ENCODE measurements at regions of chr6 and their contacts with region 1.

Region 1: DNA sequence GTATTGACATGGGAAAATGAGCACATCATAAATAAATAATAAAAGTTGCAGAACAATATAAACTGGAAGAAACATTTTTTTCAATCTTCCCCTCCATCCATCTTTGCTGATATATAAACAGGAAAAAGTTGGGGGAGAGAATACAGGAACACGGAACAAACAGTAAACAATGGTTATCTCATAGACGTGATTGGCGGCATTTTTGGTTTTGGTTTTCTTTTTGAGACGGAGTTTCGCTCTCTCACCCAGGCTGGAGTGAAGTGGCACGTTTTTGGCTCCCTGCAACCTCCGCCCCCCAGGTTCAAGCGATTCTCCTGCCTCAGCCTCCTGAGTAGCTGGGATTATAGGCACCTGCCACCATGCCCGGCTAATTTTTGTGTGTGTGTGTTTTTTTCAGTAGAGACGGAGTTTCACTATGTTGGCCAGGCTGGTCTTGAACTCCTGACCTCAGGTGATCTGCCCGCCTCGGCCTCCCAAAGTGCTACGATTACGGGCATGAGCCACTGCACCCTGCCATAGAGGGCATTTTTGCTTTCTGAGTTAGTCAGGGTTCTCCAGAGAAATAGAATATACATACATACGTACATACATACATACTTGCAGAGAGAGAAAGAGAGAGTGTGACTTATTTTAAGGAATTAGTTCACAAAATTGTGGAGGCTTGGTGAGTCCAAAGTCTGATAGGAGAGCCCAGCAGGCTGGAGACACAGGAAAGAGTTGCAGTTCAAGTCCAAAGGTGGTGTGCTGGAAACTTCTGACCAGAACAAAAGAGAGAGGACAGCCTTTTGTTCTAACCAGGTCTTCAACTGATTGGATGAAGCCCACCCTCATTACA is 22.6 kb downstream of the GNL1 start:
- DNase-seq: no peak
- ATAC-seq: no peak
- H3K4me3 Mint-ChIP-seq: no peak overlapping the region
- H3K27ac Mint-ChIP-seq: no peak overlapping the region
- H3K4me1 Mint-ChIP-seq: no peaks in the 10 kb centered on the region
- H3K27me3 Mint-ChIP-seq: no peaks in the 10 kb centered on the region; the same call in 1 of the 2 replicates
- CTCF ChIP-seq: no peak

Region 2: GRCh38 chr6:30646458-30647241 is 113.0 kb after region 1 on chr6 and contains the start of gene C6orf136:
- CTCF ChIA-PET with region 1: no interaction called
- POLR2A ChIA-PET with region 1: no interaction called
- DNase-seq: peak; percentile 91
- ATAC-seq: peak; percentile 71
- H3K4me3 Mint-ChIP-seq: peak within 1 kb of the TSS; percentile 76
- H3K27ac Mint-ChIP-seq: peak within 1 kb of the TSS; percentile 74
- H3K4me1 Mint-ChIP-seq: peaks cover 21% of the 10 kb centered on the region
- H3K27me3 Mint-ChIP-seq: no peaks in the 10 kb centered on the region
- CTCF ChIP-seq: no peak
- total RNA-seq, gene C6orf136: 21.8 to 26.5 TPM (median 25.5 TPM) in 3 replicates

Region 3: DNA sequence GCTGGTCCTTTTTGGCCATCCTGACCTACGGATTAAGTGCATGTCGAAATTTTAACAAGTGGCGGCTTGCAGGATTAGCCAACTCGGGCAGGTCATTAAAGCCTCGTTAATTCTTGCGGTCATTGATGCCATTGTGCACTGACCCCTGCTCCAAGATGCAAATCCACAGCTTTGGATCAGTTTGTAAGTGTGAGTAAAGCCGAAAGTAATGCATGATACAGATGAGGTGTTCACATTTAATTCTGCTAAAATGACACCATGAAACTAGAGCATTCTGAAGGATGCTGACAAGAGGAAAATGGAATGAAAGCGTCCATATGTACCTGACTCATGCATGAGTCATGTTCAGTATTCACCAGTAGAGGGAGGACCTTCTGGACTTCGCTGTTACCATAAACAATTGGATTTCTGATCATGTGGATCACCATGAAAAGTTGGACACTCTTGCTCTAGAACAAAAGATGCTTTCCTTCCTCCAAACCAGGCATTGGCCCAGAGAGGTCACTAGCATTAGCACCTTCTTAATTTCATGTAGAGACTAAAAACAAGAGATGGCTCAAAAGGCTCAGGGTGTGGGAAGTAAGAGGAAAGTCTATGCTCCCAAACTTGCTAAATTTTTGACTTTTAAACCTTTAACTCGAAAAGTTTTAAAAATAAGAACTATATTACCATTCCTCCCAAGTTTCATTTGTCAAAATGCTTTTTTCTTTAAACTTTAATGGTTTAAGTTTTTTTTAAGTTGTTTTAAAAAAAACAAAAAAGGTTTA is 524.6 kb after region 1 on chr6:
- CTCF ChIA-PET with region 1: no interaction called
- POLR2A ChIA-PET with region 1: interaction called, 10 read pairs
- DNase-seq: no peak
- ATAC-seq: no peak
- H3K4me3 Mint-ChIP-seq: no peak overlapping the region
- H3K27ac Mint-ChIP-seq: no peak overlapping the region
- H3K4me1 Mint-ChIP-seq: peaks cover 12% of the 10 kb centered on the region
- H3K27me3 Mint-ChIP-seq: peaks cover 3% of the 10 kb centered on the region; the same call in 1 of the 2 replicates
- CTCF ChIP-seq: no peak

Measured in WTC11 (cell line).